Ascending aorta (tissue), 2 donors: ENCODE measurements at regions of chr4 and their contacts with region 1.

Region 1: DNA sequence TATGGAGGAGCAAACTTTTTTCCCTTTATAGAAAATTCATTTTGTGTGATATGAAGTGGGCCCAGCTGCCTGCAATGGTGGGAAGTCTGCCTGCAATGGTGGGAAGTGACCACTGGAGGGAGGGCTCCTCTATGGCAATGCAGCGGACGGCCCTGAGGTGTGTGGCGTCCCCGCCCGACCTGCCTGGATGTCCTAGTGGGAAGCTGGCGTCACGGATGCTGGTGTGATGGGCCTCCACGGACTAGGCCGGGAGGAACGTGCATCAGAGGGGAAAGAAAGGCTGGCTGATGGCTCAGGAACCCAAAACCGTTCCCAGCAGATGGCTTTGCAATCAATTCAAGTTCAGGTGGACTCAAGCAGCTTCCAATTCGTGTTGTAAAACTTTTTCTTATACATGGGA is 177.9 kb downstream of the AFAP1 start:
- DNase-seq: peak; percentile 31 to 90
- H3K4me3 ChIP-seq: no peak overlapping the region
- H3K27ac ChIP-seq: peak overlapping the region; percentile 0 to 55
- H3K4me1 ChIP-seq: no peaks in the 10 kb centered on the region
- H3K27me3 ChIP-seq: no peaks in the 10 kb centered on the region
- CTCF ChIP-seq: peak; percentile 76 to 82 (median 81)

Region 2: GRCh38 chr4:7595934-7596461 is 165.7 kb before region 1 on chr4:
- intact Hi-C with region 1: no loop called
- DNase-seq: no peak
- H3K4me3 ChIP-seq: no peak overlapping the region
- H3K27ac ChIP-seq: no peak overlapping the region
- H3K4me1 ChIP-seq: no peaks in the 10 kb centered on the region
- H3K27me3 ChIP-seq: no peaks in the 10 kb centered on the region
- CTCF ChIP-seq: no peak

Region 3: GRCh38 chr4:7725951-7726350 is 35.8 kb before region 1 on chr4:
- intact Hi-C with region 1: no loop called
- DNase-seq: no peak
- H3K4me3 ChIP-seq: no peak overlapping the region
- H3K27ac ChIP-seq: no peak overlapping the region
- H3K4me1 ChIP-seq: no peaks in the 10 kb centered on the region
- H3K27me3 ChIP-seq: no peaks in the 10 kb centered on the region
- CTCF ChIP-seq: no peak

Region 4: DNA sequence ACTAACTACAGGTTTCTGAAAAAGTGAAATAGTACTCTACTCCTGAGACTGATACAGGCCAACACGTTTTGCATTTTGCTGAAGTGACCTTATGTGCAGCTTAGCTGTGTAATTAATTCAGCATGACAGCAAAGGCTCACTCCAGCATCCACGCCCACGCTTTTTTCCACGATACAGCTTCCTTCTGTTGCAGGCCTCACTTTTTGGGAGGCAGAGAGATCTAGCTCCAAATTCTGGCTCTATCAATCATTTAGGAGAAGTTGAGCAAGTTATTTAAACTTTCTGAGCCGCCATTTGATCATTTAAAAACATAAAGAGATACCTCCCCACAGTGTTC is 17.7 kb after region 1 on chr4:
- intact Hi-C with region 1: loop called (anchors 2 kb)
- DNase-seq: no peak
- H3K4me3 ChIP-seq: peak overlapping the region in 1 of 2 donors; percentile 50
- H3K27ac ChIP-seq: peak overlapping the region; percentile 45 to 83
- H3K4me1 ChIP-seq: peaks cover 9 to 14% of the 10 kb centered on the region in 2 donors
- H3K27me3 ChIP-seq: no peaks in the 10 kb centered on the region
- CTCF ChIP-seq: no peak

Region 5: DNA sequence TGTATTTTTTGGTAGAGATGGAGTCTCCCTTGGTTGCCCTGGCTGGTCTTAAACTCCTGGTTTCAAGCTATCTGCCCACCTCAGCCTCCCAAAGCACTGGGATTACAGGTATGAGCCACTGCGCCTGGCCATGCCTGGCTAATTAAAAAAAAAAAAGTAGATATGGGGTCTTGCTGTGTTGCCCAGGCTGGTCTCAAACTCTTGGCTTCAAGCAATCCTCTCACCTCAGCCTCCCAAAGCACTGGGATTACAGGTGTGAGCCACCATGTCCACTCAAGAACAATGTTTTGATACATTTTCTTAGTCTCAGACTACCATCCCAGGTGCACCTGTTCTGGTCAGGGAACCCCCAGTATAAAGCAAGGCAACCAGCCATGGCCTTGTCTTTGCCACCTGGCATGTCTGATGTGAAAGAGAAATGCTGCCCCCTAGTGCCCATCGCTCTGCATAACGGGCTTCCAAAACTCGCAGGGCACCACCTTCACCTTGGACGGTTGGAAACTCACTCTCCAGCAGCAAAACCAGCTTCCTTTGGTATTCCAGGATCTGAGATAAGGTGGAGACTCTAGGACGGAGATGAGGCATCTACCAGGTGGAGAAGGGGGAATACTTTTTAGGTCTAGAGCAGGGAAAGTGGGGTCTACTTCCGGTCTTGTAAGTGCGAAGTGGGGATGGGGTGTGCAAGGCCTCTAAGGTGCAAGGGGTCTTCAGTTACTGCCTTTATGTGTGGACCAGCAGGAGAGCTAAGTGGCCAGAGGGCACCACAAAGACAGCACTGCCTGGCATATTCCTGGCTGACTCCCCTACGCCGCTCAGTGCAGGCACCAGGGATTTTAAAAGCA is 225.6 kb after region 1 on chr4:
- intact Hi-C with region 1: loop called (anchors 2 kb)
- DNase-seq: peak in 1 of 2 donors; percentile 79
- H3K4me3 ChIP-seq: no peak overlapping the region
- H3K27ac ChIP-seq: no peak overlapping the region
- H3K4me1 ChIP-seq: no peaks in the 10 kb centered on the region
- H3K27me3 ChIP-seq: no peaks in the 10 kb centered on the region
- CTCF ChIP-seq: peak; percentile 80 to 91 (median 82)